GM10248 (cell line): ENCODE measurements at regions of chr17 and their contacts with region 1.

Region 1: GRCh38 chr17:4236456-4236855 is 27.3 kb downstream of the ANKFY1 start:
- DNase-seq: no peak
- CTCF ChIP-seq: no peak

Region 2: GRCh38 chr17:4110152-4110551 is 126.3 kb before region 1 on chr17:
- CTCF ChIA-PET with region 1: no interaction called
- POLR2A ChIA-PET with region 1: no interaction called
- DNase-seq: no peak
- CTCF ChIP-seq: no peak

Region 3: DNA sequence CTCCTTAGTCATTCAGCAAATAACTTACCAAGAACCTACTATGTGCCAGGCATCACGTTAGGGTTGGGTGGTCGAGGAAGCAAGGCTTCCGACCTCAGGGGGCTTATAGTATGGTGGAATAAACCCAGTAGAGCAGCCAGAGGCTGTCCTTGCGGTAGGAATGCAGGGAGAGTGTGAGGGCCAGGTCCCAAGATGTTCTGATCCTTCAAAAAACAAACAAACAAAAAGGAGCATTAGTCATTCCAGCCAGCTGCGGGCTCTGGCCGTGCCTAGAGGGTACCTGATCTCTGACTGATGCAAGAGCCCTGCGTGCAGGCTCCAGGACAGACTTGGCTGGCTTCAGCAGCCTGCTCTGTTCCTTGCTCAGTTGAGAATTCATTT is 75.3 kb before region 1 on chr17:
- CTCF ChIA-PET with region 1: no interaction called
- POLR2A ChIA-PET with region 1: no interaction called
- DNase-seq: no peak
- CTCF ChIP-seq: no peak

Region 4: DNA sequence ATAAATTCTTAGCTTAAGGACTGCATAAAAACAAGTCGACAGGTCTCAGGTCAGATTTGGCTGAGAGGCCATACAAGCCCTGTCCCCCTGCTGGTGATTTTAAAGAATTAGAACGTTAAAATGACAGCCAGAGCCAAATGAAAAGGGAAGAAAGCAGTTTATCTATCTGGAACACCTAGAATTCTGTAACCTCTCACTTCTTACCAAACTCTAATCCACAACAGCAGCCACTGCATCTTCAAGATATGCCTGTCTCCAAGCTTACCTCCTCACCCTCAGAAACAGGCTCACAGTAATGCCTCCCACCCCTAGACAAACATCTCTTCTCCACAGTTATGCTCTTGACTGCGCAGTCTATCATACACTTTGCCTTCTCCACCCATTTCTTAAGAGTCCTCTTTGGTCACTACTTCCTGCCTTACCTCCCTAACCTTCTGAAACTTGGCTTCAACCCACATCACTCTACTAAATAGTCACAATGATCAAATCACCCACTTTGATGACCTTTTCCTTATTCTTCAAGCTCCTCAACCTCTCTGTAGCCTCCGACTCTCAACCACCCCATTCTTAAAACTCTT is 13.1 kb after region 1 on chr17:
- CTCF ChIA-PET with region 1: interaction called, 13 read pairs
- POLR2A ChIA-PET with region 1: no interaction called
- DNase-seq: peak; percentile 59
- CTCF ChIP-seq: peak; percentile 48

Region 5: GRCh38 chr17:4297351-4297750 is 60.9 kb after region 1 on chr17:
- CTCF ChIA-PET with region 1: no interaction called
- POLR2A ChIA-PET with region 1: no interaction called
- DNase-seq: no peak
- CTCF ChIP-seq: no peak

Region 6: GRCh38 chr17:4366327-4367063 is 130.0 kb after region 1 on chr17 and contains the start of gene UBE2G1:
- CTCF ChIA-PET with region 1: no interaction called
- POLR2A ChIA-PET with region 1: no interaction called
- DNase-seq: peak; percentile 97
- CTCF ChIP-seq: peak; percentile 27